HepG2 (cell line): ENCODE measurements at regions of chr5 and their contacts with region 1.

Region 1: GRCh38 chr5:78984439-78985115 is 533 bp downstream of the ARSB start:
- DNase-seq: peak; percentile 79
- ATAC-seq: peak; percentile 67
- H3K4me3 ChIP-seq: peak overlapping the region; percentile 52 to 93 (median 88)
- H3K27ac ChIP-seq: peak overlapping the region; percentile 99
- H3K4me1 ChIP-seq: peaks cover 57% of the 10 kb centered on the region
- H3K27me3 ChIP-seq: no peaks in the 10 kb centered on the region; a peak in 1 of 5 replicates
- CTCF ChIP-seq: peak; percentile 40
- EP300 ChIP-seq: peak in 1 of 2 experiments; percentile 48; a peak in 2 of 4 replicates
- POLR2A ChIP-seq: peak; percentile 68 to 82
- RAD21 ChIP-seq: peak; percentile 35; the same call in 1 of the 2 replicates

Region 2: GRCh38 chr5:78972654-78973428 is 11.7 kb before region 1 on chr5:
- CTCF ChIA-PET with region 1: no interaction called
- POLR2A ChIA-PET with region 1: interaction called, 16 read pairs
- in situ Hi-C with region 1: no loop called
- intact Hi-C with region 1: no loop called
- DNase-seq: no peak
- ATAC-seq: no peak
- H3K4me3 ChIP-seq: no peak overlapping the region
- H3K27ac ChIP-seq: no peak overlapping the region
- H3K4me1 ChIP-seq: peaks cover 58% of the 10 kb centered on the region
- H3K27me3 ChIP-seq: no peaks in the 10 kb centered on the region
- CTCF ChIP-seq: no peak
- EP300 ChIP-seq: no peak
- POLR2A ChIP-seq: no peak
- RAD21 ChIP-seq: no peak

Region 3: DNA sequence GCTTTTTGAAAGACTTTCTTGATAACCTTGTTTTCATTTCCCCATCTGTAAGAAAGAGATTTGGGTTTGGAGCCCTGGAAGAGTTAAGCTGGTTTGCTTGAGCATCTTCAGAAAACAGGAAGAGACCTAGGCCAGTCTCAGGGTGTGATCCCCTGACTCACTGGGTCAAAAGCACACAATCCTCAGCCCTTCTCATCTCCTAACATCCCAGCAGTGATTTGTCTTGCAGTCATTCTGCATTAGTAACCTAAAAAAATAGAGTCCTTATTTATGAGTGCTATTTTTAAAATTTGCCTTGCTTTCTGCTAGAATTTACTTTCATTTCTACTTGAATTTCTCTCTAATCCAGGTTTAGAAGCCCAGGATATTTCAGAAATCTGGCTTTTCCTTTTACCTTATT is 16.9 kb after region 1 on chr5:
- CTCF ChIA-PET with region 1: no interaction called
- POLR2A ChIA-PET with region 1: interaction called, 13 read pairs
- in situ Hi-C with region 1: no loop called
- intact Hi-C with region 1: no loop called
- DNase-seq: no peak
- ATAC-seq: no peak
- H3K4me3 ChIP-seq: no peak overlapping the region
- H3K27ac ChIP-seq: no peak overlapping the region
- H3K4me1 ChIP-seq: peaks cover 23% of the 10 kb centered on the region
- H3K27me3 ChIP-seq: no peaks in the 10 kb centered on the region
- CTCF ChIP-seq: no peak
- EP300 ChIP-seq: no peak
- POLR2A ChIP-seq: no peak
- RAD21 ChIP-seq: no peak

Region 4: DNA sequence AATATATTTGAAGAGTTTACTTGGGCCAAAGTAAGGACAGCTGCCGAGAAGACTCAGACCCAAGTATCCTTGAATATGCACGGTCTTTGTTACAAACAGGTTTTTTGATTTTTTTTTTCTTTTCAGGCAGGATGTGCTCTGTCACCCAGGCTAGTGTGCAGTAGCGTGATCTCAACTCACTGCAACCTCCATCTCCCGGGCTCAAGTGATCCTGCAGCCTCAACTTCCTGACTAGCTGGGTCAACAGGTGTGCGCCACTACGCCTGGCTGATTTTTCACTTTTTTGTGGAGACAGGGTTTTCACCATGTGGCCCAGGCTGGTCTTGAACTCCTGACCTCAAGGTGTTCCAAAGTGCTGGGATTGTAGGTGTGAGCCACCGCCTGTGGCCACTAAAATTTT is 278.7 kb after region 1 on chr5:
- CTCF ChIA-PET with region 1: no interaction called
- POLR2A ChIA-PET with region 1: no interaction called
- in situ Hi-C with region 1: no loop called
- intact Hi-C with region 1: no loop called
- DNase-seq: no peak
- ATAC-seq: no peak
- H3K4me3 ChIP-seq: no peak overlapping the region
- H3K27ac ChIP-seq: no peak overlapping the region
- H3K4me1 ChIP-seq: peaks cover 16% of the 10 kb centered on the region
- H3K27me3 ChIP-seq: no peaks in the 10 kb centered on the region
- CTCF ChIP-seq: no peak
- EP300 ChIP-seq: no peak
- POLR2A ChIP-seq: no peak
- RAD21 ChIP-seq: no peak